ENCODE measurements at regions of chr17 and their contacts with region 1.

Region 1: DNA sequence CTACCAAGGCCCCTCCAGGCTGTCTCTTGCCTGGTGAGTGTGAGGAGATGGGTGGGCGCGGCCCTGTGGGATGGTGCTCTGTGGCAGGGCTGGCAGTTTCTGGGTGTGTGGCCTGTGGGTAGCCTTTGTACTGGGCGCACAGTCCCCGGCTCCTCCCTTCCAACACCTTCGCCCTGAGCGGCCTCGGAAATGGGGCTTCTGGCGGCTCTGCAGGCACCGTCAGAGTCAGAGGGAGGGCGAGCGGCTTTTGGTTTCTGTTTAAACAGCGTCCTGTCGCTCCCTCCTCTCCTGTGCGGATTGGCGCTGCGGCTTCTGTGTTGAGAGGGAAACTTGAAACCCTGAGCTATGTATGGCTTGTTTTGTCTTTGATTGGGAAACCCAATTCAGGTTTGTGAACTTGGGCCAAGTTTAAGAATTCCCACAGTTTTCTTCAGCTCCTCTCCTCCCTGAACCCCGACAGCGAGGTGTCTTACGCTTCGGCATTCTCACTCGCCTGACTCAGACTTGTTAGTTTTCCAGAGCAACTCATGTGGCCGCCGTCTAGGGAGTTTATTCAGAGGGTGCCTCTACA is 8.3 kb upstream of the ZNF750 start:
- DNase-seq: peak; percentile 16
- H3K4me3 ChIP-seq: peak overlapping the region in 2 of 3 experiments; percentile 11 to 14
- H3K27ac ChIP-seq: no peak overlapping the region
- H3K4me1 ChIP-seq: peaks cover 32% of the 10 kb centered on the region
- H3K27me3 ChIP-seq: no peaks in the 10 kb centered on the region
- CTCF ChIP-seq: no peak
- POLR2A ChIP-seq: no peak

Region 2: GRCh38 chr17:82457997-82458864 is 389.9 kb before region 1 on chr17 and contains the start of gene NARF:
- CTCF ChIA-PET with region 1: no interaction called
- POLR2A ChIA-PET with region 1: no interaction called
- dilution Hi-C with region 1: no loop called
- intact Hi-C with region 1: loop called (anchors 10 kb)
- DNase-seq: peak; percentile 98
- H3K4me3 ChIP-seq: peak within 1 kb of the TSS; percentile 30 to 65 (median 57)
- H3K27ac ChIP-seq: peak within 1 kb of the TSS; percentile 96
- H3K4me1 ChIP-seq: peaks cover 11% of the 10 kb centered on the region
- H3K27me3 ChIP-seq: no peaks in the 10 kb centered on the region
- CTCF ChIP-seq: no peak
- POLR2A ChIP-seq: peak; percentile 85
- total RNA-seq, gene NARF: 83.4 and 85.6 TPM in 2 replicates

Region 3: GRCh38 chr17:82668631-82669099 is 179.4 kb before region 1 on chr17:
- CTCF ChIA-PET with region 1: no interaction called
- POLR2A ChIA-PET with region 1: no interaction called
- dilution Hi-C with region 1: no loop called
- intact Hi-C with region 1: no loop called
- DNase-seq: no peak
- H3K4me3 ChIP-seq: no peak overlapping the region
- H3K27ac ChIP-seq: no peak overlapping the region
- H3K4me1 ChIP-seq: no peaks in the 10 kb centered on the region
- H3K27me3 ChIP-seq: no peaks in the 10 kb centered on the region
- CTCF ChIP-seq: peak; percentile 32 to 58
- POLR2A ChIP-seq: no peak

Region 4: DNA sequence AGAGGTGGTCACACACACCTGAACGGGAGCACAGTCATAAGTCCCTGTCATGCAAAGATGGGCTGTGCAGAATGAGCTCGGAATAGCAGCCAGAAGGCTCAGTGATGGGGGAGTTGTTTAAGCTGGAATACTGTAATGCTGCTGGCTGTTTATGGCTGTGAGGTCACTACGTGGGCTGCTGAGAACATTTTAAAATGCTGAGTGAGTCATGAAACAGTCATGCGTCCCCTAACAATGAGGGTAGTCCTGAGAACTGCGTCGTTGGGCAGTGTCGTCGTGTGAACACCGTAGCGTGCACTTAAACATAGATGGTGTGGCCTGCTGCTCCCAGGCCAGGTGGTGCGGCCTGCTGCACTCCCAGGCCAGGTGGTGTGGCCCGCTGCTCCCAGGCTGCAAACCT is 56.6 kb before region 1 on chr17:
- CTCF ChIA-PET with region 1: no interaction called
- POLR2A ChIA-PET with region 1: no interaction called
- dilution Hi-C with region 1: no loop called
- intact Hi-C with region 1: loop called (anchors 2 kb)
- DNase-seq: peak; percentile 37
- H3K4me3 ChIP-seq: no peak overlapping the region
- H3K27ac ChIP-seq: peak overlapping the region; percentile 35
- H3K4me1 ChIP-seq: no peaks in the 10 kb centered on the region
- H3K27me3 ChIP-seq: no peaks in the 10 kb centered on the region
- CTCF ChIP-seq: no peak
- POLR2A ChIP-seq: no peak

Region 5: GRCh38 chr17:82863941-82864774 is 16.1 kb after region 1 on chr17:
- CTCF ChIA-PET with region 1: interaction called, 5 read pairs
- POLR2A ChIA-PET with region 1: interaction called, 3 read pairs
- dilution Hi-C with region 1: no loop called
- intact Hi-C with region 1: loop called (anchors 1 kb)
- DNase-seq: peak; percentile 40
- H3K4me3 ChIP-seq: no peak overlapping the region
- H3K27ac ChIP-seq: no peak overlapping the region
- H3K4me1 ChIP-seq: peaks cover 39% of the 10 kb centered on the region
- H3K27me3 ChIP-seq: no peaks in the 10 kb centered on the region
- CTCF ChIP-seq: no peak
- POLR2A ChIP-seq: no peak

Region 6: GRCh38 chr17:82882715-82883418 is 34.8 kb after region 1 on chr17:
- CTCF ChIA-PET with region 1: interaction called, 9 read pairs
- POLR2A ChIA-PET with region 1: interaction called, 4 read pairs
- dilution Hi-C with region 1: no loop called
- intact Hi-C with region 1: loop called (anchors 2 kb)
- DNase-seq: no peak
- H3K4me3 ChIP-seq: no peak overlapping the region
- H3K27ac ChIP-seq: no peak overlapping the region
- H3K4me1 ChIP-seq: peaks cover 14% of the 10 kb centered on the region
- H3K27me3 ChIP-seq: no peaks in the 10 kb centered on the region
- CTCF ChIP-seq: no peak
- POLR2A ChIP-seq: no peak

Region 7: GRCh38 chr17:82900370-82901140 is 52.4 kb after region 1 on chr17:
- CTCF ChIA-PET with region 1: no interaction called
- POLR2A ChIA-PET with region 1: no interaction called
- dilution Hi-C with region 1: no loop called
- intact Hi-C with region 1: no loop called
- DNase-seq: no peak
- H3K4me3 ChIP-seq: no peak overlapping the region
- H3K27ac ChIP-seq: no peak overlapping the region
- H3K4me1 ChIP-seq: no peaks in the 10 kb centered on the region
- H3K27me3 ChIP-seq: no peaks in the 10 kb centered on the region
- CTCF ChIP-seq: no peak
- POLR2A ChIP-seq: no peak

Region 8: GRCh38 chr17:82962864-82963684 is 115.0 kb after region 1 on chr17:
- CTCF ChIA-PET with region 1: no interaction called
- POLR2A ChIA-PET with region 1: no interaction called
- dilution Hi-C with region 1: no loop called
- intact Hi-C with region 1: loop called (anchors 1 kb)
- DNase-seq: peak; percentile 76
- H3K4me3 ChIP-seq: no peak overlapping the region
- H3K27ac ChIP-seq: no peak overlapping the region
- H3K4me1 ChIP-seq: peaks cover 9% of the 10 kb centered on the region
- H3K27me3 ChIP-seq: no peaks in the 10 kb centered on the region
- CTCF ChIP-seq: peak; percentile 72 to 91
- POLR2A ChIP-seq: no peak

Measured in endothelial cell of umbilical vein (primary cell).